Ascending aorta (tissue), 2 donors: ENCODE measurements at regions of chr1 and their contacts with region 1.

Region 1: GRCh38 chr1:176656257-176656995 is 193.5 kb downstream of the PAPPA2 start:
- DNase-seq: peak; percentile 9 to 86
- H3K4me3 ChIP-seq: peak overlapping the region in 1 of 2 donors; percentile 5
- H3K27ac ChIP-seq: peak overlapping the region; percentile 89 to 96
- H3K4me1 ChIP-seq: peaks cover 0 to 14% of the 10 kb centered on the region in 2 donors
- H3K27me3 ChIP-seq: no peaks in the 10 kb centered on the region
- CTCF ChIP-seq: peak in 2 of 3 experiments; percentile 26 to 33

Region 2: DNA sequence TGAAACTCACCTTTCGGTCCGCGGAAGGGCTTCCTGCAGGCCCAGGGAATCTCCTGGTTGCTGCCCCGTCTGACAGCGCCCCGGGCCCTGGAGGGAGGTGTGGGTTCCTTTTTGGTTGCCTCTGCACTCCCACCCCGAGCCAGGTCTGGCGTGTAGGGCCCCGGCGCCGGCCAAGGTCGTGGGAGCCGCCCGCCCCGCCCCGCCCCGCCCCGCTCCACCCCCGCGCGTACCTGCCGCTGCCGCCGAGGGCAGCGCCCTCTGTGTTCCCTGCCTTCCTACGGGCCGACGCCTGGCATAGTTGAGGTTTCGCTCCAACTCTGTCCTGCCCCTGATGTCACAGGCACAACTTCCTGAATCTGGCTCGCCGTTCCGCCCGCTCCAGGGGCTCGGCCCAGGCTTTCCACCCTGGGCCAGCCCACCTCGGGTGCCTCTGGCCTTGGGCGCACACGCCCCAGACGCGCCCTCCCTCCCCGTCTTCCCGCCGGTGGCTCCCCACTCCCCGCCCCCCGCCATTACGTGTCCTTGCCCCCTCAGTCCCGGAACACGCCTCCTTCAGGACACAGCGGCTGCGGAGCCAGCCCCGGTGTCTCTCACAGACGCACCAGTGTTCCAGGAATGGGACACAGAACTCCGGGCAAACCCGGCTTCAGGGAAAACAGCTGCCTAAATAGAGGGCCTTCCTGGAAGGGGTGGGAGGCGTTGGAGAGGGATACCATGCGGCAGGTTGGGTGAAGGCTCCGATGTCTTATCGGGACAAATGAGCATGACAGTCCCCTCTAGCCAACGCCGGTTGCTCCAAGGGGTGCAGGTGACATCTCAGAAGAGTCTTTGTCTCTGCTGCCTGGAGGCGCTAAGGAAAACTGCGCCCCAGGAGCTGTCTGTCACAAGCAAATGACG is 1463.5 kb before region 1 on chr1 and contains the start of gene KIAA0040:
- intact Hi-C with region 1: loop called (anchors 10 kb)
- DNase-seq: peak; percentile 37 to 91
- H3K4me3 ChIP-seq: peak within 1 kb of the TSS; percentile 58 to 77
- H3K27ac ChIP-seq: peak within 1 kb of the TSS; percentile 76 to 80
- H3K4me1 ChIP-seq: peaks cover 3 to 13% of the 10 kb centered on the region in 2 donors
- H3K27me3 ChIP-seq: no peaks in the 10 kb centered on the region
- CTCF ChIP-seq: peak in 2 of 3 experiments; percentile 17 to 30
- total RNA-seq, gene KIAA0040: 36.7 TPM

Region 3: GRCh38 chr1:176206961-176207902 is 449.2 kb before region 1 on chr1 and contains the start of gene COP1:
- intact Hi-C with region 1: loop called (anchors 5 kb)
- DNase-seq: peak; percentile 82 to 97
- H3K4me3 ChIP-seq: peak within 1 kb of the TSS; percentile 79 to 98
- H3K27ac ChIP-seq: peak within 1 kb of the TSS; percentile 94 to 98
- H3K4me1 ChIP-seq: peaks cover 3 to 20% of the 10 kb centered on the region in 2 donors
- H3K27me3 ChIP-seq: no peaks in the 10 kb centered on the region
- CTCF ChIP-seq: no peak
- total RNA-seq, gene COP1: 76.3 TPM

Region 4: DNA sequence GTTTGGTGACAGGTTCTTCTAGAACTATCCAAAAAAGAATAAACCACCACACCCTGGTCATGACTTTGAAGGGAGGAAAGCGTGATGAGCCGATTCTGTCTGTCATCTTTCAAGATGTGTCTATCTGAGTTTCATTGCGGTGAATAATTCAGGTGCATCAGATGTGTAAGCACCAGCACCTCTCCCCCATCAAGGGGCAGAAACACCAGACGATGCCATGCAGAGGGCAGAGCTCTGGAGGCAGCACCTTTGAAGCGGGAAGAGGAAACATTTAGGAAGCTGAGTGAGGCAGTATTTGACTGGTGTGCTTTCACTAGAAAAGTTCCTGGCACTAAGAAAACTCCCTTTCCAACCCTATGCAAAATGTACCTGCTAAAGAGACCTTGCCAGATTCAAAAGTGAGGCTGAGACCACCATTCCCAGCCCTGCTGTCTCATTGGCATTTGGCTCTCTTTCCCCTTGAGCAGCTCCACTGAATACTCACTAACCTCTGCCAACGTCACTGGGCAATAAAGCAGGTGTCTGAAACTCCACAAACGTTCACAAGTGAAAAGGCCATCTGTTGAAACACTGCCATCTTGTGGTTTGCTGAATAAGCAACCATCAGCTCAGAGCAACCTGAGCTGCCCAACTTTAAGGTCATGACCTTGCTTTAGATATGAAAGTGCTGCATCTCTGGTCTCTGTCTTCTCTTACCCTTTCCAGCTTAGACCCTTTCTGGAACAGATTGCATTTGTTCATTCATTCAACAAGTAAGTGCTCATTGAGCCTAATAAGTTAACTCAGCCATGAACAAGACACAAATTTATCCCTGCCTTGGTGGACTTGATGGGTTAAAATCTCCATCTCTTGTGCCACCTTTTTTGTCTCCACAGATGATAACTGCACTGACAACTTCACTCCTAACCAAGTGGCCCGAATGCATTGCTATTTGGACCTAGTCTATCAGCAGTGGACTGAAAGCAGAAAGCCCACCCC is 35.1 kb after region 1 on chr1:
- intact Hi-C with region 1: loop called (anchors 5 kb)
- DNase-seq: peak in 1 of 2 donors; percentile 66
- H3K4me3 ChIP-seq: no peak overlapping the region
- H3K27ac ChIP-seq: no peak overlapping the region
- H3K4me1 ChIP-seq: peaks cover 0 to 5% of the 10 kb centered on the region in 2 donors
- H3K27me3 ChIP-seq: no peaks in the 10 kb centered on the region
- CTCF ChIP-seq: peak; percentile 36 to 83 (median 73)

Region 5: GRCh38 chr1:177010211-177010825 is 353.9 kb after region 1 on chr1:
- intact Hi-C with region 1: no loop called
- DNase-seq: no peak
- H3K4me3 ChIP-seq: no peak overlapping the region
- H3K27ac ChIP-seq: no peak overlapping the region
- H3K4me1 ChIP-seq: no peaks in the 10 kb centered on the region
- H3K27me3 ChIP-seq: no peaks in the 10 kb centered on the region
- CTCF ChIP-seq: no peak

Region 6: GRCh38 chr1:178344513-178345082 is 1688.2 kb after region 1 on chr1:
- intact Hi-C with region 1: loop called (anchors 10 kb)
- DNase-seq: no peak
- H3K4me3 ChIP-seq: peak overlapping the region; percentile 9 to 23
- H3K27ac ChIP-seq: peak overlapping the region; percentile 71 to 73
- H3K4me1 ChIP-seq: peaks cover 5 to 37% of the 10 kb centered on the region in 2 donors
- H3K27me3 ChIP-seq: no peaks in the 10 kb centered on the region
- CTCF ChIP-seq: peak; percentile 35 to 57 (median 45)